Heart right ventricle (tissue), 16 donors: ENCODE measurements at regions of chr19 and their contacts with region 1.

Region 1: DNA sequence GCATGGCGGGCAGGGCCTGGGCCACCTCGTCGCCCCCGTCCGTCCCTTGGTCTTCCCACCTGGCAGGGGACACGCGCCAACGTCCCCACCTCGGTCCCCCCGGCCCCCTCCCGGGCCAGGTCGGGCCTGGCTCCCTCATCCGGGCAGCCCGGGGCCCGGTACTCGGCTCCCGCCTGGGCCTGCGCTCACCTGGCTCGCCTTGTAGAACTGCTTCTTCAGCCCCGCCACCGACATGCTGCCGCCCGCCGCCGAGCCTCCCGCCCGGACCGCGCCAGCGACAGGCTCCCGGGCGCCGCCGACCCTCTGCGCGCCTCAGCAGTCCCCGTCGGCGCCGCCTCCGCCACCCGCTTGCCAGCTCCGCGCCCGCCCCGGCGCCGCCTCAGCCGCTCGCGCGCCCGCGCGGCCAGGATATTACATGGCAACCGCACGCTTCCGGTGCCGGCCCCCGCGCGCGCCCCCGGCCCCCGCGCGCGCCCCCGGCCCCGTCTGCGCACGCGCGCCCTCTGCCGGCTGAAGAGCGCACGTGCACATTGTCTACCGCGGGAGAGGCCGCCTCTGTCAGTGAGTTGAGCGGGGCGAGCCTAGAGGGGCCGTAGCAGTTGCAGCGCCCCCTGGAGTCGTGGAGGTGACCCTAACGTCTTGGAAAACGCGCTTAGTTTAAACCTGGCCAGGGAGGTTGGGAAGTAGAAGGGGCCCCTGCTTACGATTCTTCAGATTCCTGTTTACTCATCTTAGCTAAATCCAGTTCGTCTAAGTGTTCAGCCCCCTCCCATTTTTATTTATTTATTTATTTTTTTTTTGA is at the start of gene SH3GL1:
- DNase-seq: peak; percentile 91
- ATAC-seq: peak; percentile 55 to 82 (median 68)
- H3K4me3 ChIP-seq: peak within 1 kb of the TSS; percentile 57 to 99 (median 96)
- H3K27ac ChIP-seq: peak within 1 kb of the TSS; percentile 88 to 99 (median 96)
- H3K4me1 ChIP-seq: peaks cover 19 to 68% (median 55%) of the 10 kb centered on the region in 9 donors
- H3K27me3 ChIP-seq: no peaks in the 10 kb centered on the region
- CTCF ChIP-seq: peak; percentile 86 to 98 (median 94)
- total RNA-seq, gene SH3GL1: 13.1 to 33.4 (median 17.6) TPM

Region 2: DNA sequence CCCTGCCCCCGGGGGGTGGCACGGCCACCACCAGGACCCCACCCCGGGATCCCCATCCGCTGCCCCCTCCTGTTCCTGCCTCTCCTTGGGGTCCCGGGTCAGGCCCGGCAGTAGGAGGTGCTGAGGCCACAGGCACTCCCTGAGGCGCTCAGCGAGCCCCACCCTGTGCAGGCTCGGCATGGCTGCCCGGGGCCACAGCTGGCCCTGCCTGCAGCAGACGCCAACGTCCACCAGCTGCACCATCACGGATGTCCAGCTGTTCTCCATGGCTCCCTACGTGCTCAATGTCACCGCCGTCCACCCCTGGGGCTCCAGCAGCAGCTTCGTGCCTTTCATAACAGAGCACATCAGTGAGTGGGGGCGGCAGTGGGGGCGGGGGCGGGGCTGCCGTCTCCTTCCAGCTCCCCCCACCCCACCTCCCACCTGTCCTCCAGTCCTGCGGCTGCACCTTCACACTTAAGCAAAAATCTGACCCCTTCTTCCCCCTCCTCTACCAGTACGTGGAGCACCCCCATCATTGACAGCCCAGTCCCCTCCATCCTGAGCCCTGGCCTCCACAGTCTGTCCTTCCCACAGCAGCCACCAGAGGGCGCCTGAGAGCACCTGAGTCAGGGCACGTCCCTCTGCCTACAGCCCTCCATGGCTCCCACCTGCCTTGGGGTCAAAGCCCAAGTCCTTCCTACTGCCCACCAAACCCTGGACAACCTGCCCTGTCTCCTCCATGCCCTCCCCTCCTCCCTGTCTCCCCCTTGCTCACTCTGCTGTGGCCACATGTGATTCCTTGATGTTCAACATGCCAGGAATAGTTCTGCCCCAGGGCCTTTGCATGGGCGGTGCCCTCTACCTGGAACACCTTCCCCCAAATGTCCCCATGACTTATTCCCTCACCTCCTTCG is 167.1 kb before region 1 on chr19:
- intact Hi-C with region 1: no loop called
- DNase-seq: peak in 1 of 2 donors; percentile 56
- ATAC-seq: peak in 3 of 8 donors; percentile 39 to 55 (median 47)
- H3K4me3 ChIP-seq: no peak overlapping the region
- H3K27ac ChIP-seq: no peak overlapping the region
- H3K4me1 ChIP-seq: peaks cover 0 to 11% (median 0%) of the 10 kb centered on the region in 9 donors
- H3K27me3 ChIP-seq: peaks cover 0 to 65% (median 38%) of the 10 kb centered on the region in 7 donors
- CTCF ChIP-seq: peak in 8 of 9 donors; percentile 24 to 67 (median 39)

Region 3: DNA sequence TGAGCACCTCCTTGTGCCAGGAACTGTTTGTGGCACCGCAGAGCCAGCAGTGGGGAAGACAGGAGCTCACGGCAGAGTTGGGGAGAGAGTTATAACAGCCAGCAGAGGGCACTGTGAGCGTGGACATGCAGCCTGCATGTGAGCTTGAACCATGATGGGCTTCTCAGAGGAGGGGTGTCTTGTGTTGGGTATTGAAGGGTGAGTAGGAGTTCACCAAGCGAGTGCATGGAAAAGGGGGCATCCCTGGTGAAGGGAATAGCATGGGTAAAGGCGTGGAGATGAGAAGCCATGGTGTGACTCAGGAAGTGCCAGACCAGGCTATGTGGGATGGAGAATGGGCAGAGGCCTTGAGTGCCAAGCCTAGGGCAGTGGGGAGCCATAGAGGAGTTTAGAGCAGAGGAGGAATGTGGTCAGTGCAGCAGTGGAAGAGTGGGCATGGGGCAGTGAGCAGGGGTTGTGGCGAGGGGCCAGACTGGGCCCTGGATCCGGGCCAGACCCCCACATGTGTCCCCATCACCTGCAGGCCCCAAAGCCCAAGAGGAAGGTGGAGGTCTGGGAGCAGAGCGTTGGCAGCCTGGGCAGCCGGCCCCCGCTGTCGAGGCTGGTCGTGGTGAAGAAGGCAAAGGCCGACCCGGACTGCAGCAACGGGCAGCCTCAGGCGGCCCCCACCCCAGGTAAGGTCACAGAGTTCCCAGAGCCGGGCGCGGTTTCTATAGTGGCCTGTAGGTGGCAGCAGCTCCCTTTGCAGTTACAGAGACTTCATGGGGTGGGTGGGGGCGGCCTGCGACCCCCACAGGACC is 133.0 kb before region 1 on chr19:
- intact Hi-C with region 1: loop called in 3 of 10 experiments (anchors 2 to 5 kb)
- DNase-seq: peak; percentile 34 to 53
- ATAC-seq: peak; percentile 57 to 72 (median 66)
- H3K4me3 ChIP-seq: no peak overlapping the region
- H3K27ac ChIP-seq: no peak overlapping the region
- H3K4me1 ChIP-seq: no peaks in the 10 kb centered on the region
- H3K27me3 ChIP-seq: no peaks in the 10 kb centered on the region
- CTCF ChIP-seq: peak; percentile 71 to 90 (median 85)

Region 4: DNA sequence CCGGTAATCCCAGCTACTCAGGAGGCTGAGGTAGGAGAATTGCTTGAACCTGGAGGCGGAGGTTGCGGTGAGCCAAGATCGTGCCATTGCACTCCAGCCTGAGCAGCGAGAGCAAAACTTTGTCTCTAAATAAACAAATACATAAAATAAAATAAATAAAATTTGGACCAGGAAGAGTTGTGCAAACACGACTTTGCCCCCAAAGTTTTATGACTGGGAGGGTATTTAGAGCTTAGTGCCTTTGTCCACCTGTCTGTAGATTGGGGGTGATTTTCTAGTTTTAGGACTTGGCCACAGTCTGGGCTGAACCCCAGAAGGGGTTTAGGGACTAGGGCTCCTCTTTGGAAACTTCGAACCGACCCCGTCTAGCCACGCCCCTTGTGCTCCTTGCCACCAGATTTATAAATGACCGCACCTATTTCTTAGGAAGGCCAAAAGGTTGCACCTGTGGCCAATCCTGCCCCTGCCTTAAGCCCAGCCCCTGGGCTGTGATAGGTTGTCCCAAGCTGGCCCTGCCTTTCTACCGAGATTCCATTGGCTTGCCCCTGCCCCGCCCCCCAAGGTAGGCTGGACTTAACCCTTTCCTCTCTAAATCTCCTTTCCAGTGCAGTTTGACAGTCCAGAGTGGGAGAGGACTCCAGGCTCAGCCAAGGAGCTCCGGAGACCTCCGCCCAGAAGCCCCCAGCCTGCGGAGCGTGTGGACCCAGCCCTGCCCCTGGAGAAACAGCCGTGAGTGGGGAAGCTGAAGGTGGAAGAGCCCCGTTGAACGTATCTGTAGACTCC is 116.0 kb before region 1 on chr19:
- intact Hi-C with region 1: no loop called
- DNase-seq: no peak
- ATAC-seq: peak in 1 of 8 donors; percentile 37
- H3K4me3 ChIP-seq: no peak overlapping the region
- H3K27ac ChIP-seq: no peak overlapping the region
- H3K4me1 ChIP-seq: peaks cover 0 to 8% (median 8%) of the 10 kb centered on the region in 9 donors
- H3K27me3 ChIP-seq: peaks cover 17 to 61% (median 52%) of the 10 kb centered on the region in 7 donors
- CTCF ChIP-seq: no peak

Region 5: GRCh38 chr19:4342615-4343369 is 57.5 kb before region 1 on chr19:
- intact Hi-C with region 1: loop called in 5 of 10 experiments (anchors 2 to 5 kb)
- DNase-seq: peak; percentile 93 to 99
- ATAC-seq: peak; percentile 94 to 98 (median 96)
- H3K4me3 ChIP-seq: peak overlapping the region; percentile 36 to 89 (median 74)
- H3K27ac ChIP-seq: peak overlapping the region; percentile 79 to 98 (median 94)
- H3K4me1 ChIP-seq: peaks cover 3 to 29% (median 25%) of the 10 kb centered on the region in 9 donors
- H3K27me3 ChIP-seq: no peaks in the 10 kb centered on the region
- CTCF ChIP-seq: peak in 6 of 9 donors; percentile 17 to 51 (median 43)

Region 6: GRCh38 chr19:4354897-4355296 is 45.4 kb before region 1 on chr19:
- intact Hi-C with region 1: no loop called
- DNase-seq: no peak
- ATAC-seq: no peak
- H3K4me3 ChIP-seq: no peak overlapping the region
- H3K27ac ChIP-seq: no peak overlapping the region
- H3K4me1 ChIP-seq: peaks cover 0 to 8% (median 0%) of the 10 kb centered on the region in 9 donors
- H3K27me3 ChIP-seq: no peaks in the 10 kb centered on the region
- CTCF ChIP-seq: no peak

Region 7: DNA sequence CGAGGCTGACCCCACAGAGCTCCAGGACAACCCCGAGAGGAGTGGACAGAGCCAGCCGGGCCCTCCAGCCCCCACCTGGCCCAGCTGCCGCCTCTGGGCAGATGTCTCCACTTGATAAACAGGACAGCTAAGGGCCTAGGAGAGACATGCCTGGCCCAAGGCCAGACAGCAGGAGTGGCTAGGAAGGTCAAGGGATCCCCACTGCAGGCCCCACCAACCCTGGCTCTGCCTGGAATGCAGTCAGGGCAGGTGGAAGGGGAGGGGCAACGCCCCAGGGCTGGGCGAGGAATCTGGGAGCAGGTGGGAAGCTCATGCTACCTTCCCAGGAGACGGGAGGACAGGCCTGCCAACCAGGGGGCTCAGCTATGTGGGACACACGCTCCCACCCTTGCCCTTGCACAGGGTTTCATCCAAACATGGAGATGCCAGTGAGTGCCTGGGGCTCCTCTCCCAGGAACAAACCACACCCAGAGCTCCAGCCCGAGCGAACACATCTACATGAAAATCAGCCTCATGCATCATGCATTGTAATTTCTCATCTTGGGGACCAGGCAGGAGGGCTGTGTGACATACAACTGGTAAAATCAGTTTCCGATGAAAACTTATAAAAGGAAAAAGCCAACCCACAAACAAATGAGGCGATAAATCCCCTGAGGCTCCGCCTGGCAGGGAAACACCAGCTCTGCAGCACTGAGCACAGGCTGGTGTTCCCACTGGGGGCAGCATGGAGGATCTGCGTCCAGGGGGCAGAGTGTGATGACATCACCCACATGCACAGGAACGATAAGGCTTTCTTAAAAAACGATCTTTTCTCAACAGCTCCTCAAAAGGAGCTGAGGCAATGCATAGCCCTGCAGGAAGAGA is 24.9 kb before region 1 on chr19:
- intact Hi-C with region 1: loop called in 3 of 10 experiments (anchors 1 to 2 kb)
- DNase-seq: no peak
- ATAC-seq: peak in 2 of 8 donors; percentile 1 to 2
- H3K4me3 ChIP-seq: no peak overlapping the region
- H3K27ac ChIP-seq: peak overlapping the region; percentile 26 to 96 (median 81)
- H3K4me1 ChIP-seq: peaks cover 60 to 96% (median 93%) of the 10 kb centered on the region in 9 donors
- H3K27me3 ChIP-seq: no peaks in the 10 kb centered on the region
- CTCF ChIP-seq: peak in 3 of 9 donors; percentile 21 to 36 (median 32)

Region 8: GRCh38 chr19:4425537-4425936 is 25.2 kb after region 1 on chr19:
- intact Hi-C with region 1: no loop called
- DNase-seq: no peak
- ATAC-seq: no peak
- H3K4me3 ChIP-seq: no peak overlapping the region
- H3K27ac ChIP-seq: no peak overlapping the region
- H3K4me1 ChIP-seq: peaks cover 0 to 6% (median 0%) of the 10 kb centered on the region in 9 donors
- H3K27me3 ChIP-seq: no peaks in the 10 kb centered on the region
- CTCF ChIP-seq: no peak

Region 9: GRCh38 chr19:4471403-4472173 is 71.3 kb after region 1 on chr19:
- intact Hi-C with region 1: loop called in 1 of 10 experiments (anchors 1 kb)
- DNase-seq: peak; percentile 96 to 99
- ATAC-seq: peak; percentile 95 to 97 (median 96)
- H3K4me3 ChIP-seq: peak overlapping the region; percentile 23 to 100 (median 94)
- H3K27ac ChIP-seq: peak overlapping the region; percentile 11 to 93 (median 87)
- H3K4me1 ChIP-seq: peaks cover 8 to 31% (median 25%) of the 10 kb centered on the region in 9 donors
- H3K27me3 ChIP-seq: no peaks in the 10 kb centered on the region
- CTCF ChIP-seq: no peak